WTC11 (cell line): ENCODE measurements at regions of chr19 and their contacts with region 1.

Region 1: GRCh38 chr19:48492925-48493717 is 18.5 kb downstream of the LMTK3 start:
- DNase-seq: peak; percentile 99
- ATAC-seq: peak; percentile 81
- H3K4me3 Mint-ChIP-seq: peak overlapping the region; percentile 81
- H3K27ac Mint-ChIP-seq: peak overlapping the region; percentile 98
- H3K4me1 Mint-ChIP-seq: peaks cover 29% of the 10 kb centered on the region
- H3K27me3 Mint-ChIP-seq: peaks cover 35% of the 10 kb centered on the region
- CTCF ChIP-seq: no peak

Region 2: DNA sequence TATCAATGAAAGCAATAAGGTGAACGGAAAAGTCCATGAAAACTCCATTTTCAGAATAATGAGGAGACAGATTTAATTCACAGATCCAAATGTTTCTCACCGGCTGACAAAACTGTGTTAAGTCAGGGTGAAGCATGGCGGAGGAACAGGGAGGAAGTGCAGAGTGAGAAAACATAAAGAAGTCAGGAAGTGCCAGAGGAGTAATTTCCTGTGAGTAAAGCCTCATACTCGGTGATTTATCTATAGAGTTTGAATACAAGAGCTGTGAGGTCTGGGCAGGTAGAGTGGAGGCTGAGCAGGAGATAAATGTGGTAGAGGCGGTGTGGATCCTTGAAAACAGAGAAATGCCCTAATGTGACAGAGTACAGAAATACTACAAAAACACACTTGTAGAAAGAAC is 248.8 kb before region 1 on chr19:
- CTCF ChIA-PET with region 1: no interaction called
- POLR2A ChIA-PET with region 1: no interaction called
- DNase-seq: no peak
- ATAC-seq: no peak
- H3K4me3 Mint-ChIP-seq: no peak overlapping the region
- H3K27ac Mint-ChIP-seq: peak overlapping the region; percentile 75
- H3K4me1 Mint-ChIP-seq: peaks cover 8% of the 10 kb centered on the region
- H3K27me3 Mint-ChIP-seq: no peaks in the 10 kb centered on the region
- CTCF ChIP-seq: no peak

Region 3: DNA sequence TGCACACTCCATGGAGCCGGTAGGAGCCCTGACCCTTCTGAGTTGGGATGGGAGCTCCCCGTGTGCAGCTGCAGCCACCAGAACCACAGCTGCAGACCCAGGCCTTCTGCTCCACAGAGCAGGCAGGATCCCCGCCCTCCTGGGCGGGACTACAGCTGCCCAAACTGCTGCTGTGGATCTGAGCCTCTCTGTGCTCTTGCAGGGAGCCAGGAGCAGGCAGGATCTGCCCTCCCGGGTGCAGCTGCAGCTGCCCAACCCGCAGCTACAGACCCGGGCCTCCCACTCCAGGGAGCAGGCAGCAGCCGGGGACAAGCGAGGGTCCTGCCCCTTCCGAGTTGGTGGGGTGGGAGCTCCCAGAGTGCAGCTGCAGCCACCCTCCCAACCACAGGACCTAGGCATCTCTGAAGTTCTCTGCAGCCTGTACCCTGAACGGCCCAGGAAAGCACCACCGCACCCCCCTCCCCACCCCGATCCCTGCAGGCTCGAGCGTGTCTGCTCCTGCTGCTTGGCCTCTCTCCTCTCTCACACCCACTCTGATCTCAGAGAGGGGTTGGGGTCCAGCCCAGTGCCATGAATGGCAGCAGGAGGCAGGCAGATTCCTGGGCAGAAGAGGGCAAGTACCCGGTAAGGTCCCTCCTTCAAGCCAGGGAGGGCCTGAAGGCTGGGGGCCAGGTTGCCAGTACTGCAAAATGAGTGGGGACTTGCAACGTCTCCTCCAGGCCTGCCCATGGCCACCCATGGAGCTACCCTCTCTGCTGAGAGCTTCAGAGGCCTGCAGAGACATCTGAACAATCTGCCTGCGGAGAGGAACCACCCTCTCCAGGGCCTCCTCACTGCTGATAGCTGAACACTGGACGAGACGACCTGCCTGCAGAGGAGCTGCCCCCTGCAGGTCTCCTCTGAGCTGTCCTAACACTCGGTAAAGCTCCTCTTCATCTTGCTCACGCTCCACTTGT is 184.2 kb before region 1 on chr19:
- CTCF ChIA-PET with region 1: interaction called, 14 read pairs
- POLR2A ChIA-PET with region 1: no interaction called
- DNase-seq: peak; percentile 51
- ATAC-seq: peak; percentile 85
- H3K4me3 Mint-ChIP-seq: no peak overlapping the region
- H3K27ac Mint-ChIP-seq: no peak overlapping the region
- H3K4me1 Mint-ChIP-seq: peaks cover 8% of the 10 kb centered on the region
- H3K27me3 Mint-ChIP-seq: no peaks in the 10 kb centered on the region
- CTCF ChIP-seq: no peak

Region 4: GRCh38 chr19:48480558-48481500 is 12.3 kb before region 1 on chr19:
- CTCF ChIA-PET with region 1: interaction called, 11 read pairs
- POLR2A ChIA-PET with region 1: interaction called, 4 read pairs
- DNase-seq: peak; percentile 44
- ATAC-seq: peak; percentile 23
- H3K4me3 Mint-ChIP-seq: peak overlapping the region; percentile 81
- H3K27ac Mint-ChIP-seq: peak overlapping the region; percentile 74; the same call in 1 of the 2 replicates
- H3K4me1 Mint-ChIP-seq: peaks cover 23% of the 10 kb centered on the region
- H3K27me3 Mint-ChIP-seq: peaks cover 7% of the 10 kb centered on the region; the same call in 1 of the 2 replicates
- CTCF ChIP-seq: no peak

Region 5: GRCh38 chr19:48513289-48514122 is 20.4 kb after region 1 on chr19:
- CTCF ChIA-PET with region 1: interaction called, 11 read pairs
- POLR2A ChIA-PET with region 1: no interaction called
- DNase-seq: peak; percentile 83
- ATAC-seq: peak; percentile 83
- H3K4me3 Mint-ChIP-seq: no peak overlapping the region
- H3K27ac Mint-ChIP-seq: peak overlapping the region; percentile 51; the same call in 1 of the 2 replicates
- H3K4me1 Mint-ChIP-seq: peaks cover 18% of the 10 kb centered on the region
- H3K27me3 Mint-ChIP-seq: no peaks in the 10 kb centered on the region; the same call in 1 of the 2 replicates
- CTCF ChIP-seq: no peak

Region 6: DNA sequence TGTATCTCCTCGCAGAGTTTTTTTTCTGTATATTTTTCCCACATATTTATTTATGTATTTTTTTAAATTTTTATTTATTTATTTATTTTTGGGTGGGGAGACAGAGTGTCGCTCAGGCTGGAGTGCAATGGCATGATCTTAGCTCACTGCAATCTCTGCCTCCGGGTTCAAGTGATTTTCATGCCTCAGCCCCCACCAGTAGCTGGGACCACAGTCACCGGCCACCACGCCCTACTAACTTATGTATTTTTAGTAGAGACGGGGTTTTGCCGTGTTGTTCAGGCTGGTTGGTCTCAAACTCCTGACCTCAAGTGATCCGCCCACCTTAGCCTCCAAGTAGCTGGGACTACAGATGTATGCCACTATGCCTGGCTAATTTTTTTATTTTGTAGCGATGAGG is 43.7 kb after region 1 on chr19:
- CTCF ChIA-PET with region 1: no interaction called
- POLR2A ChIA-PET with region 1: no interaction called
- DNase-seq: no peak
- ATAC-seq: no peak
- H3K4me3 Mint-ChIP-seq: no peak overlapping the region
- H3K27ac Mint-ChIP-seq: no peak overlapping the region
- H3K4me1 Mint-ChIP-seq: no peaks in the 10 kb centered on the region
- H3K27me3 Mint-ChIP-seq: no peaks in the 10 kb centered on the region
- CTCF ChIP-seq: no peak

Region 7: GRCh38 chr19:48582168-48582567 is 89.0 kb after region 1 on chr19:
- CTCF ChIA-PET with region 1: interaction called, 122 read pairs
- POLR2A ChIA-PET with region 1: interaction called, 11 read pairs
- DNase-seq: no peak
- ATAC-seq: no peak
- H3K4me3 Mint-ChIP-seq: no peak overlapping the region
- H3K27ac Mint-ChIP-seq: no peak overlapping the region
- H3K4me1 Mint-ChIP-seq: peaks cover 4% of the 10 kb centered on the region; the same call in 1 of the 2 replicates
- H3K27me3 Mint-ChIP-seq: peaks cover 4% of the 10 kb centered on the region; the same call in 1 of the 2 replicates
- CTCF ChIP-seq: no peak

Region 8: GRCh38 chr19:48608798-48609263 is 115.7 kb after region 1 on chr19:
- CTCF ChIA-PET with region 1: interaction called, 28 read pairs
- POLR2A ChIA-PET with region 1: no interaction called
- DNase-seq: peak; percentile 63
- ATAC-seq: peak; percentile 84
- H3K4me3 Mint-ChIP-seq: peak overlapping the region; percentile 37; the same call in 1 of the 2 replicates
- H3K27ac Mint-ChIP-seq: no peak overlapping the region
- H3K4me1 Mint-ChIP-seq: peaks cover 4% of the 10 kb centered on the region
- H3K27me3 Mint-ChIP-seq: no peaks in the 10 kb centered on the region
- CTCF ChIP-seq: no peak

Region 9: DNA sequence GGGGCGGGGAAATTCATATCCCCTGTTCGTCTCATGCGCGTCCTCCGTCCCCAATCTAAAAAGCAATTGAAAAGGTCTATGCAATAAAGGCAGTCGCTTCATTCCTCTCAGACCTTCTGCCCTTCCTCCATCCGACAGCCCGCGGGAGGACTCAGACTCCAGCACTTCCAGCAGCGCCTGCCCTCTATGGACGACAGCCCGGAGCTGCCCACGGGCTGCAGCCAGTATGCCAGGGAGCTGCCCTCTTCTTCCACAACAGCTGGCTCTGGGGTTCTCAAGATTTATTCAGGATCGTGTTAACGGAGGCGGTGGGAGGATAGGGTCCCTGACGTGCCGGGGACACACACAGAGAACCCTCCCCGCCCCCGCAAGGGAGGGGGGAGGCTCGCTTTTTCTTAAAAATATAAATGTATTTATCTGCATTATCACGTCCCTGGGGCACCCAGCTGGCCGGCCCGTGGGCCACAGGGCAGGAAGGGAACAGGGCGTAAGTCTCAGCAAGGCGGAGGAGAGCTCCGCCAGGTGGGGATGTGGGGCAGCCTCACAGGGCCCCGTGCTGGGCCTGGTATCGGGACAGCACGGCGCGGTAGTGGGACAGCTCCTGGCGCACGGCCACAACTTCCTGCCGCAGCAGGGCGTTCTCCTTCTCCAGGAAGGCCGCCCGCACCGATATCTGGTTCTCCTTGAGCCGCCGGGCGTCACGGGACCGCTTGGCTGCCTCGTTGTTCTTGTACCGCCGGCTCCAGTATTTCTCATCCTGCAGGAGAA is 137.4 kb after region 1 on chr19:
- CTCF ChIA-PET with region 1: interaction called, 13 read pairs
- POLR2A ChIA-PET with region 1: interaction called, 6 read pairs
- DNase-seq: peak; percentile 72
- ATAC-seq: peak; percentile 11
- H3K4me3 Mint-ChIP-seq: peak overlapping the region; percentile 71
- H3K27ac Mint-ChIP-seq: peak overlapping the region; percentile 99
- H3K4me1 Mint-ChIP-seq: peaks cover 32% of the 10 kb centered on the region
- H3K27me3 Mint-ChIP-seq: no peaks in the 10 kb centered on the region
- CTCF ChIP-seq: no peak